ENCODE measurements at regions of chr19 and their contacts with region 1.

Region 1: DNA sequence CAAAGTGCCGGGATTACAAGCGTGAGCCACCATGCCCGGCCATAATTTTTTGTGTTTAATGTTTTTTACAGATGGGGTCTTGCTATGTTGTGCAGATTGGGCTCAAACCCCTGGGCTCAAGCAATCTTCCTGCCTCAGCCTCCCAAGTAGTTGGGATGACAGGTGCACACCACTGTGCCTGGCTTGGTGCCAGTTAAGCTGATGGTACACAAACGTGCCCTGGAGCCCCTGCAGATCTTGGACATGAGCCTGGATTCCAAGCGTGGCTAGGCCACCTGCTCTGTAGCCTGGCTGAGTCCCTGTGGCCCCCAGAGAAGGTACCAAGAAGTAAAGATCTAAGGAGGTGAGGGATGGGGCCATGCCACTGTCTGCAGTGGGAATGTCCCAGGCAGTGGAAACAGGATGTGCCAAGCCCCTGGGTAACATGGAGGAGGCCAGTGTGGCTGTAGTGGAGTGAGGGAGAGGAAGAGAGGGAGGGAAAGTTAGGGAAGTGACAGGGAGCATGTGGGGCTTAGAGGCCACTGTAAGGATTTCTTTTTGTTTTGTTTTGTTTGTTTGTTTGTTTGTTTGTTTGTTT is 7.0 kb downstream of the PRODH2 start:
- DNase-seq: no peak
- H3K4me3 ChIP-seq: no peak overlapping the region
- H3K4me3 Mint-ChIP-seq: no peak overlapping the region
- H3K27ac Mint-ChIP-seq: no peak overlapping the region
- H3K4me1 ChIP-seq: no peaks in the 10 kb centered on the region
- H3K4me1 Mint-ChIP-seq: no peaks in the 10 kb centered on the region
- H3K27me3 ChIP-seq: no peaks in the 10 kb centered on the region
- H3K27me3 Mint-ChIP-seq: peaks cover 7% of the 10 kb centered on the region
- CTCF ChIP-seq: no peak

Region 2: DNA sequence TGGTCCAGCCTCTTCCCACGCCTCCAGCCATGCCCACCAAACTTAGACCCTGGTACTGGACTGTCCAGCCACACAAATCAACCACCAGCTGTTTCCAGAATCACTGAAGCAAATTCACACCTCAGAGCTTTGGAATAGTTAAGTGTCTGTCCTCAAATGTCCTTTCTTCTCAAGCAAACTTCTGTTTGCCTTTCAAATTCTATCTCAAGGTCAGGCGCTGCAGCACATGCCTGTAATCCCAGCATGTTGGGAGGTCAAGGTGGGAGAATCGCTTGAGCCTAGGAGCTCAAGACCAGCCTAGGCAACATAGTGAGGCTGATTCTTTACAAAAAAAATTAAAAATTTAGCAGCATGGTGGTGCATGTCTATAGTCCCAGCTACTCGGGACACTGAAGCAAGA is 26.4 kb after region 1 on chr19:
- CTCF ChIA-PET with region 1: no interaction called
- POLR2A ChIA-PET with region 1: no interaction called
- intact Hi-C with region 1: no loop called
- DNase-seq: no peak
- H3K4me3 ChIP-seq: no peak overlapping the region
- H3K4me3 Mint-ChIP-seq: no peak overlapping the region
- H3K27ac Mint-ChIP-seq: no peak overlapping the region
- H3K4me1 ChIP-seq: no peaks in the 10 kb centered on the region
- H3K4me1 Mint-ChIP-seq: no peaks in the 10 kb centered on the region
- H3K27me3 ChIP-seq: peaks cover 2% of the 10 kb centered on the region
- H3K27me3 Mint-ChIP-seq: peaks cover 32% of the 10 kb centered on the region
- CTCF ChIP-seq: no peak

Region 3: DNA sequence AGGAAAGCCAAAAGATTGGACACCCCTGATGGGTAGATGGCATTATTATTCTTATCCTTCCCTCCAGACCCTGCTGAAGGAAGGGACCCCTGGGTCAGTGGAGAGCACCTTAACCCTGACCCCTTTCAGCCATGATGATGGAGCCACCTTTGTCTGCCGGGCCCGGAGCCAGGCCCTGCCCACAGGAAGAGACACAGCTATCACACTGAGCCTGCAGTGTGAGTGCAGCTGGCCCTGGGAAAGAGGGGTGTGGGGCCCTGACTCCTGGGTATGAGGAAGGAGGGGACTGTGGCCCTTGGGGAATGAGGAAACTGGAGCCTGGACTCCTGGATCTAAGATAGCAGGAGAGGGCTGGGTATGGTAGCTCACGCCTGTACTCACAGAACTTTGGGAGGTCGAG is 53.8 kb after region 1 on chr19:
- CTCF ChIA-PET with region 1: interaction called, 10 read pairs
- POLR2A ChIA-PET with region 1: no interaction called
- intact Hi-C with region 1: no loop called
- DNase-seq: no peak
- H3K4me3 ChIP-seq: no peak overlapping the region
- H3K4me3 Mint-ChIP-seq: no peak overlapping the region
- H3K27ac Mint-ChIP-seq: no peak overlapping the region
- H3K4me1 ChIP-seq: peaks cover 17% of the 10 kb centered on the region
- H3K4me1 Mint-ChIP-seq: peaks cover 14% of the 10 kb centered on the region
- H3K27me3 ChIP-seq: no peaks in the 10 kb centered on the region; the same call in 1 of the 2 replicates
- H3K27me3 Mint-ChIP-seq: peaks cover 9% of the 10 kb centered on the region
- CTCF ChIP-seq: no peak